Thyroid gland (tissue), 4 donors: ENCODE measurements at regions of chr7 and their contacts with region 1.

Region 1: GRCh38 chr7:135662373-135663114 is at the start of gene STMP1:
- DNase-seq: peak; percentile 96 to 97
- H3K4me3 ChIP-seq: peak within 1 kb of the TSS; percentile 5 to 87 (median 64)
- H3K27ac ChIP-seq: peak within 1 kb of the TSS; percentile 79 to 91 (median 89)
- H3K4me1 ChIP-seq: peaks cover 9 to 17% of the 10 kb centered on the region in 2 donors
- H3K27me3 ChIP-seq: no peaks in the 10 kb centered on the region
- CTCF ChIP-seq: peak in 4 of 6 experiments; percentile 75 to 95 (median 90)
- POLR2A ChIP-seq: peak; percentile 88 to 93
- total RNA-seq, gene STMP1: 28.2 to 42.2 (median 38.6) TPM

Region 2: GRCh38 chr7:135414850-135415439 is 247.6 kb before region 1 on chr7:
- intact Hi-C with region 1: no loop called
- DNase-seq: peak; percentile 26 to 27
- H3K4me3 ChIP-seq: no peak overlapping the region
- H3K27ac ChIP-seq: no peak overlapping the region
- H3K4me1 ChIP-seq: no peaks in the 10 kb centered on the region
- H3K27me3 ChIP-seq: no peaks in the 10 kb centered on the region
- CTCF ChIP-seq: peak in 4 of 6 experiments; percentile 8 to 42 (median 34)
- POLR2A ChIP-seq: no peak

Region 3: DNA sequence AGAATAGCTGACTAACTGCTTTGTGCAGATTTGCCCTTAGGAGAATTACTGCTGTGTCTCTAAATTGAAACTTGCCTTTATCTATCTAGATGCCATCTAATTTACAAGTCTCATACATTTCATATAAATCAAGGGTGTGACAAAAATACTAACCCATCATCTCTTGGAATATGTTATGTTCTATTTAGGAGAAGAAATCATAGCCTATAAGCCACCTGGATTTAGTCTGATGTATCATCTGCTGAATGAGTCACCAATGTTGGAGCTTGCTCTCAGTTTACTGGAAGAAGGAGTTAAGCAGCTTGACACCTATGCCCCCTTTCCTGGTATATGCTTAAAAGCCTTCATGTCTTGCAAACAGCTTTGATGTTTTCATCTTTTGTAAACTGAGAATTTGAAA is 61.4 kb before region 1 on chr7:
- intact Hi-C with region 1: no loop called
- DNase-seq: no peak
- H3K4me3 ChIP-seq: no peak overlapping the region
- H3K27ac ChIP-seq: no peak overlapping the region
- H3K4me1 ChIP-seq: no peaks in the 10 kb centered on the region
- H3K27me3 ChIP-seq: no peaks in the 10 kb centered on the region
- CTCF ChIP-seq: no peak
- POLR2A ChIP-seq: no peak

Region 4: GRCh38 chr7:135977007-135977741 is 314.6 kb after region 1 on chr7 and contains the start of gene MTPN:
- intact Hi-C with region 1: loop called (anchors 10 kb)
- DNase-seq: peak; percentile 99
- H3K4me3 ChIP-seq: peak within 1 kb of the TSS; percentile 86 to 99 (median 91)
- H3K27ac ChIP-seq: peak within 1 kb of the TSS; percentile 74 to 88 (median 88)
- H3K4me1 ChIP-seq: peaks cover 19 to 31% of the 10 kb centered on the region in 2 donors
- H3K27me3 ChIP-seq: no peaks in the 10 kb centered on the region
- CTCF ChIP-seq: no peak
- POLR2A ChIP-seq: peak in 1 of 2 donors; percentile 68
- total RNA-seq, gene MTPN: 116 to 128 (median 125) TPM